B cell (primary cell): ENCODE measurements at regions of chr2 and their contacts with region 1.

Region 1: DNA sequence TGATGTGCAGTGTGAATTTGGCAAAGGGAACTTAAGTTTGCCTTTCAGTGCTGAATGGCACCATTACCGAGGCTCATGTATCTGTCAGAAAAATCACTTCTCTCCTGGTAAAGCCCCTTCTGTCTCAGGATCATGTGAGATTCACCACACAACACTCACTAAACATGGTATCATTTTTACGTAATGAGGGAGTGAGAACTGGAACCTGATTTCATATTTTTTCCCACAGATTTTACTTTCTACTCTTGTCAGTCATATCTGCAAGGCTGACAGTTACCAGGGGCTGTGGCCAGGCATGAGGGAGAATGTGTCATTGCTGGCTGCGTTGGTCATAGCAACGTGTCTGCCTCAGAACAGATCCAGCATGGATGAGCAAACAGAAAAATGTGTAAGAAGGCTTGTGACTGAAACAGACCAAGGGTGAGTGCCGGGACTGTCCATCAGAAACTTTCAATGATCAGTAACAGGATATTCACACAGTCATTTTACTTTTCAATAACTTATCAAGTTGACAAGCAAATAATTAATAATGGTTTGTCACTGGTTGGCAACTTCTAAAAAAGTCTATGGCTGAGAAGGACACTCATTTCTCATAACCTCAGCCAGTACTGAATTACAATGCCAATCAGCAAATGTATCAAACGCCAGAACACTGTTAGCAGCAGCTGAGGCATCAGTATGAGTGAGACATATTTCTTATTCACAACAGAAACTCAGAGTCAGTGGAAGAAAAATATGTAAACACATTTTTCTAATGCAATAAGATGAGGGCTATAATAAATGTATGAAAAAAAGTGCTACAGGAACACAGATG is 100.5 kb downstream of the CDC42EP3 start:
- DNase-seq: no peak
- ATAC-seq: no peak
- H3K4me3 ChIP-seq: no peak overlapping the region
- H3K4me3 Mint-ChIP-seq: peak overlapping the region; percentile 17
- H3K27ac ChIP-seq: no peak overlapping the region
- H3K27ac Mint-ChIP-seq: peak overlapping the region; percentile 8
- H3K4me1 ChIP-seq: peaks cover 3 to 6% of the 10 kb centered on the region in 2 donors
- H3K4me1 Mint-ChIP-seq: peaks cover 28% of the 10 kb centered on the region
- H3K27me3 ChIP-seq: no peaks in the 10 kb centered on the region
- H3K27me3 Mint-ChIP-seq: no peaks in the 10 kb centered on the region
- CTCF ChIP-seq: no peak

Region 2: DNA sequence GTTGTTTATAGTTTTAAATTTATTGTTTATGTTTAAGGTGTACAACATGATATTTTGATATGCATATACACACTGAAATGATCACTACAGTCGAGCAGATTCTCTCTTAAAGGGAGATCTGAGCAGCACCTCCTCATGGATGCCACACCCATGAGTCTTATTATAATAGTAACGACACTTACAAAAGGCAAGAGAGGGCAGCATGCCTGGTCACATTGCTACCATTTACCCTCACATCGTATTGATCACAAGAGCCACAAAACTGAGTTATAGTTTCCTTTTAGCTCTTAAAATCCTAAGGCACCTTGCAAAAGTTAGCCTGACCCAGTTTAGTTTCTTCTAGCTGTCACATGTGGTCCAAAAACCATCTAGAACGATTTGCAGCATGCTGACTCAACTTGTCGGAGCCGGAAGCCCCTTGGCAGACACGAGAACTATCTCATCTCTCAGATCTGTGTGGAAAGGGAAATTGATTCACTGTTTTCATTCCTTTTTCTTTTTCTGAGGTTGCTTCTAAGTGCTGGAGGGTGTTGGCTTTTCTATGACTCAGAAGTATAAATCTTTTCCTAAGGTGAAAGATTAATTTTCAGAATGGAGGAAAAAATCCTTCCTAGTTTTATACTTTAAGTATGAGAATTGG is 15.1 kb after region 1 on chr2:
- CTCF ChIA-PET with region 1: interaction called, 3 read pairs
- POLR2A ChIA-PET with region 1: no interaction called
- intact Hi-C with region 1: loop called (anchors 2 kb)
- DNase-seq: no peak
- ATAC-seq: no peak
- H3K4me3 ChIP-seq: no peak overlapping the region
- H3K4me3 Mint-ChIP-seq: peak overlapping the region; percentile 33
- H3K27ac ChIP-seq: no peak overlapping the region
- H3K27ac Mint-ChIP-seq: no peak overlapping the region
- H3K4me1 ChIP-seq: peaks cover 18 to 22% of the 10 kb centered on the region in 2 donors
- H3K4me1 Mint-ChIP-seq: peaks cover 48% of the 10 kb centered on the region
- H3K27me3 ChIP-seq: no peaks in the 10 kb centered on the region
- H3K27me3 Mint-ChIP-seq: no peaks in the 10 kb centered on the region
- CTCF ChIP-seq: no peak